ENCODE measurements at regions of chr10 and their contacts with region 1.

Region 1: DNA sequence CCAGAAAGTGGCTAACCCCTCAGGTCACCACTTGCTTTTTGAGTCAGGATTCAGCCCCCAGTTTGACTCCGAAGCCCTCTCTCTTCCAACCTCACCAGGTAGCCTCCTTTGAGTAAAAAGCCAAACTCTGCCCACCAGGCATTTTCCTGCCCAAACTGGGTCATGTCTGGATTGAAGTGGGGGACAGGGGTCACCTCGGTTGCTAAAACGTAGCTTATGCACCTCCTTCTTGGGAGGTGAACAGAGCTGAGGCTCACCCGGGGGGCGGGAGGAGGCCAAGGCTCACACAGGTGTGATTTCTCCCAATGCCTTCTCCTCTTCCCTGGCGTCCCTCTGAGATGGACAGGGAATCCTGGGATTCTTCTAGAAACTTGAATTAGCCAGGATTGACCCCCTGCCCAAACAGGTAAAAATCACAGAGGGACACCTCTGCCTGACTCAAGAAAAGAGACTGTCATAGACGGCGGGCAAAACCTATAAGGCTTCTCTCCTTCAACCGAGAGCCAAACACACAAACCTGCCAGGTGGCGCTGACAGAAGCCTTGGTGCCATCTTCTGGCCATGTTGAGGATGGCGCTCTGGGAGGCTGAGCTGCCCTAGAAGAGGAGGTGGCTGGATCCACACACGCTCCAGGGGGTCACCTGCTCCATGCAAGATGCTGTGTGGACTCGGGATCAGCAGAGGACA is 51.6 kb downstream of the PRLHR start:
- DNase-seq: peak; percentile 86
- H3K4me3 Mint-ChIP-seq: no peak overlapping the region
- H3K27ac Mint-ChIP-seq: no peak overlapping the region
- H3K4me1 Mint-ChIP-seq: no peaks in the 10 kb centered on the region
- H3K27me3 Mint-ChIP-seq: peaks cover 52% of the 10 kb centered on the region

Region 2: GRCh38 chr10:118459726-118460193 is 84.1 kb before region 1 on chr10:
- intact Hi-C with region 1: loop called (anchors 10 kb)
- DNase-seq: peak; percentile 86
- H3K4me3 Mint-ChIP-seq: no peak overlapping the region
- H3K27ac Mint-ChIP-seq: no peak overlapping the region
- H3K4me1 Mint-ChIP-seq: peaks cover 6% of the 10 kb centered on the region
- H3K27me3 Mint-ChIP-seq: peaks cover 28% of the 10 kb centered on the region

Measured in activated CD4-positive, alpha-beta T cell treated with anti-CD3 and anti-CD28 coated beads, Interleukin-2, amount 10 ng/mL, durations not matched to agents 24 days and 14 days (primary cell).